ENCODE measurements at regions of chr6 and their contacts with region 1.

Region 1: DNA sequence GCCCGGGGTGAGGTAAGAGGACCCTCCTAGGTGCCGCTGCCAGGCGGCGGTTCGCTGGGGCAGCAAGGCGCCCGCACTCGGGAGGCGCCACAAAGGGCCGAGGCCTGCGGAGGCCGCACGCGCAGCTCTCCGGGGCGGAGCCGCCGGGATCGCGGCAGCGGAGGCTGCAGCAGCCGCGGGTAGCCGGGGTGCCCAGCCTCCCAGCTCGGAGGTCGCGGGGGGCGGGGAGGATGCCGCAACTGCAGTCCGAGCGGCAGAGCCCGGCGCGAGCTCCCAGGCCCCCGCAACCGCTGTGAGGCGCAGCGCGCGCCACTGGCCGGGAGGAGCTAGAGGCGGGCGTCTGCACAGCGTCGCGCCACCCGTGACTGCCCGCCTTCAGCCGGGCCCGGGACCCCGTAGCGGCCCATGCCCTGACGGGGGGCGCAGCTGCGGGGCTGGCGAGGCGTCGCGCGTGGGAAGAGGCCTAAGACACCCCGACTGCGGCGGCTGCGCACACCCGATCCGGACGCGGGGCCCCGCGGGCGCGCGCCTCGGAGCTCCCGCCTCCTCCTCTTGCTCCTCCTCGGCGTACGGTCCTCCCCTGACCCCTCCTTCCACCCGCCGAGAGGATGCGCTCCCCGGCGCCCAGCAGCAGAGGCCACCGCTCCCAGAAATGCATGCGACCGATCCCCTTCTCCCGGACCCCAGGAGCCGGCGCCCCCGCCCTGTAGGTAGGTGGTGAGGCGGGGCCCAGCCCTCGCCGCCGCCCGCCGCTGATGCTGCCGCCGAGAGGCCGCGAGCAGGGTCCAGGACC is at the start of gene NCOA7:
- DNase-seq: peak; percentile 85
- ATAC-seq: peak; percentile 85
- H3K4me3 Mint-ChIP-seq: peak within 1 kb of the TSS; percentile 96
- H3K27ac Mint-ChIP-seq: peak within 1 kb of the TSS; percentile 99
- H3K4me1 Mint-ChIP-seq: peaks cover 36% of the 10 kb centered on the region
- H3K27me3 Mint-ChIP-seq: no peaks in the 10 kb centered on the region
- total RNA-seq, gene NCOA7: 51.1 to 58.6 TPM

Region 2: GRCh38 chr6:125746731-125747594 is 43.6 kb before region 1 on chr6:
- POLR2A ChIA-PET with region 1: interaction called, 11 read pairs
- DNase-seq: peak; percentile 56
- ATAC-seq: peak; percentile 57
- H3K4me3 Mint-ChIP-seq: peak overlapping the region; percentile 87
- H3K27ac Mint-ChIP-seq: peak overlapping the region; percentile 70
- H3K4me1 Mint-ChIP-seq: peaks cover 24% of the 10 kb centered on the region
- H3K27me3 Mint-ChIP-seq: peaks cover 59% of the 10 kb centered on the region

Region 3: DNA sequence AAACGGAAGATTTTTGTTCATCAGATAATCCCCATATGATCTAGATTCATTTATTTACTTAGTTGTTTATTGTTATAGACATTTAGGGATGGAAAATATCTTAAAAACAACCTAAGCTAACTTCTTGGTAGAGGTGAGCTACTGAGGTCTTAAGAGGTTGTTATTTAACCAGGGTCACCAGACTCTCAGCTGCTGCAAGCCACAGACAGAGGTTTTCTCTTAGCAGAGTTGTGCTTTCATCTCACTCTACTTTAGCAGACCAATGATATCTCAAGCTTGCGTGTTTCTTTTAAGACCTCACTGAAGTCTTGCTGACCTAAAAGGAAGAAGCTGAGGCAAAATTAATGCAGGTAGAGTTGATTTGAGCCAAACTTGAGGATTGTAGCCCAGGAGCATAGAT is 43.8 kb after region 1 on chr6:
- POLR2A ChIA-PET with region 1: interaction called, 11 read pairs
- DNase-seq: no peak
- ATAC-seq: peak; percentile 57
- H3K4me3 Mint-ChIP-seq: no peak overlapping the region
- H3K27ac Mint-ChIP-seq: no peak overlapping the region
- H3K4me1 Mint-ChIP-seq: peaks cover 34% of the 10 kb centered on the region
- H3K27me3 Mint-ChIP-seq: no peaks in the 10 kb centered on the region

Region 4: DNA sequence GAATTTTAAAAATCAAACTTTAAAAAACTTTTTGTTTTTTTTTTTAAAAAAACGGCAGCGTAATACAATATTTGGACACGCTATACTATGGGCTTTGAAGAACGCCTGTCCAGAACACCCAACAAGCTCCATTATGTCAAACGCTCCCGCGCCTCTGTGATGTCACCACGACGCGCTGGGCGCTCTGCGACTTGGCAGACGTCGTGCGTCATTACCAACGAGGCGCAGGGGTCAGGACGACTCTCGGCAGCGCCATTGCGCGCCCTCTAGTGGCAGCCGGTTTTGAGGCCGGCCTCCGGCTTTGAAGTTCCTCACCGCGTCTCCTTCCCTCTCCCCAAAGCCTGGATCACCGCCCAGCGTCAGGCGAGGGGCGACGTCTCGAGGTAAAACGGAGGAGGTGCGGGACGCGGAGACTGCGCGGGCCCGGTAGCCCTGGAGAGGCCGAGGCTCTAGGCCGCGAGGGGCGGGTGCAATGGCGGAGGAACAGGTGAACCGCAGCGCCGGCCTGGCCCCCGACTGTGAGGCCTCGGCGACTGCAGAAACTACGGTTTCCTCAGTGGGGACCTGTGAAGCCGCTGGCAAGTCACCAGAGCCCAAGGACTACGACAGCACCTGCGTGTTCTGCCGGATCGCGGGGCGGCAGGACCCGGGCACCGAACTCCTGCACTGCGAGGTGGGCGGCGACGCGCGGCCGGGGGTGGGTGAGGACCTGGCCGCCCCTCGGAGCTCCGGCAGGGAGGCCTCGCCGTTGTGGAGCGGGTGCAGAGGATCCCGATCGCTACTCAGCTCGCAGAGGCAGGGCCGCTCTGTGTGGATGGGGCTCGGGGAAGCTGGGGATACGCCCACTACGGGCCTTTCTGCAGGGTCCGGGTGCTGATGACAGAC is 166.2 kb after region 1 on chr6 and contains the start of gene HINT3:
- POLR2A ChIA-PET with region 1: interaction called, 63 read pairs
- DNase-seq: peak; percentile 98
- ATAC-seq: peak; percentile 88
- H3K4me3 Mint-ChIP-seq: no peak within 1 kb of the TSS
- H3K27ac Mint-ChIP-seq: peak within 1 kb of the TSS; percentile 75
- H3K4me1 Mint-ChIP-seq: peaks cover 6% of the 10 kb centered on the region
- H3K27me3 Mint-ChIP-seq: peaks cover 7% of the 10 kb centered on the region
- total RNA-seq, gene HINT3: 10.6 to 10.8 TPM